Activated CD4-positive, alpha-beta memory T cell treated with anti-CD3 and anti-CD28 coated beads for 36 hours (primary cell): ENCODE measurements at regions of chr5 and their contacts with region 1.

Region 1: GRCh38 chr5:2038321-2039179 is 155.8 kb upstream of the IRX4 start:
- DNase-seq: peak; percentile 66
- H3K4me3 Mint-ChIP-seq: peak overlapping the region; percentile 57
- H3K27ac Mint-ChIP-seq: no peak overlapping the region
- H3K4me1 Mint-ChIP-seq: no peaks in the 10 kb centered on the region
- H3K27me3 Mint-ChIP-seq: peaks cover 34% of the 10 kb centered on the region

Region 2: GRCh38 chr5:1763548-1763911 is 275.0 kb before region 1 on chr5:
- CTCF ChIA-PET with region 1: interaction called, 10 read pairs
- POLR2A ChIA-PET with region 1: no interaction called
- intact Hi-C with region 1: loop called (anchors 5 kb)
- DNase-seq: peak; percentile 57
- H3K4me3 Mint-ChIP-seq: no peak overlapping the region
- H3K27ac Mint-ChIP-seq: no peak overlapping the region
- H3K4me1 Mint-ChIP-seq: no peaks in the 10 kb centered on the region
- H3K27me3 Mint-ChIP-seq: peaks cover 11% of the 10 kb centered on the region